Psoas muscle (tissue), 8 donors: ENCODE measurements at regions of chr18 and their contacts with region 1.

Region 1: GRCh38 chr18:67232406-67232805 is 284.1 kb downstream of the DSEL start:
- DNase-seq: no peak
- ATAC-seq: no peak
- H3K4me3 ChIP-seq: no peak overlapping the region
- H3K27ac ChIP-seq: no peak overlapping the region
- H3K4me1 ChIP-seq: no peaks in the 10 kb centered on the region
- H3K27me3 ChIP-seq: no peaks in the 10 kb centered on the region
- CTCF ChIP-seq: no peak

Region 2: GRCh38 chr18:67980241-67980640 is 747.8 kb after region 1 on chr18:
- intact Hi-C with region 1: loop called in 1 of 2 experiments (anchors 10 kb)
- DNase-seq: no peak
- ATAC-seq: no peak
- H3K4me3 ChIP-seq: no peak overlapping the region
- H3K27ac ChIP-seq: no peak overlapping the region
- H3K4me1 ChIP-seq: no peaks in the 10 kb centered on the region
- H3K27me3 ChIP-seq: no peaks in the 10 kb centered on the region
- CTCF ChIP-seq: no peak

Region 3: GRCh38 chr18:68676913-68677312 is 1444.5 kb after region 1 on chr18:
- intact Hi-C with region 1: no loop called
- DNase-seq: no peak
- ATAC-seq: no peak
- H3K4me3 ChIP-seq: no peak overlapping the region
- H3K27ac ChIP-seq: no peak overlapping the region
- H3K4me1 ChIP-seq: no peaks in the 10 kb centered on the region
- H3K27me3 ChIP-seq: no peaks in the 10 kb centered on the region
- CTCF ChIP-seq: no peak